Activated CD8-positive, alpha-beta T cell treated with anti-CD3 and anti-CD28 coated beads for 36 hours (primary cell): ENCODE measurements at regions of chr4 and their contacts with region 1.

Region 1: DNA sequence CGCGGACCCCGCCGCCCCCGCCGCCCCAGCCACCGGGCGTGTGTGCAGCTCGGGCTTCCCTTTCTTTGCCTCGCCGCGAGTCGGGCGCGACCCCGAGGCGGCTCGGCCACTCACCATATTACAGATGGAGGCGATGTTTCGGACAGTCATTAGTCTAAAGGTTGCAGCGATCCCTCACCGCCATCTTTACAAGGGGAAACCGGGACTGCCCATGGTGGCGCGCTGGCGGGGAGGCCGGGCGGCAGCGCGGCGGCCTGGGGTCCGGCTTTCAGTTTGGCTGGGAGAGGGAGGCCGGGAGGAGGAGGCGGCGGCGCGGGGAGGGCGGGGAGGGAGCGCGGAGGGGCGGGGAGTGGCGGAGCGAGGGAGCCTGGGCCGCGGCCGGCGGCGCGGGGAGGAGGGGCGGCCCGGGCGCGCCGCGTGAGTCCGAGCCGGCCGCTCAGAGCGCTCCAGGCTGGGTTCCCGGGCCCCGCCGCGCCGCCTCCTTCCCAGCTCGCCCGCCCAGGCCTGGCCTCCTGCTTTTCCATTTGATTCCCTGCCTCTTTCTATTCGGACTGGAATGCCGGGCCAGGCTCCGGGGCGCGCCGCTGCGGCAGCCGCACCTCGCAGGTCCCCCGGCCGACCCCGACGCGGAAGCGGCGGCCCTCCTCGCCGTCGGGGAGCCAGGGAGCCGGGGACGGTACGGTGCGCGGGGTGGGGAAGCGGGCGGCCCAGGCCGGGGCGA is at the start of gene USP46:
- DNase-seq: peak; percentile 35
- ATAC-seq: peak; percentile 85
- H3K4me3 Mint-ChIP-seq: peak within 1 kb of the TSS; percentile 78
- H3K27ac Mint-ChIP-seq: peak within 1 kb of the TSS; percentile 55
- H3K4me1 Mint-ChIP-seq: peaks cover 17% of the 10 kb centered on the region
- H3K27me3 Mint-ChIP-seq: peaks cover 29% of the 10 kb centered on the region
- CTCF ChIP-seq: no peak
- total RNA-seq, gene USP46: 2.8 TPM

Region 2: DNA sequence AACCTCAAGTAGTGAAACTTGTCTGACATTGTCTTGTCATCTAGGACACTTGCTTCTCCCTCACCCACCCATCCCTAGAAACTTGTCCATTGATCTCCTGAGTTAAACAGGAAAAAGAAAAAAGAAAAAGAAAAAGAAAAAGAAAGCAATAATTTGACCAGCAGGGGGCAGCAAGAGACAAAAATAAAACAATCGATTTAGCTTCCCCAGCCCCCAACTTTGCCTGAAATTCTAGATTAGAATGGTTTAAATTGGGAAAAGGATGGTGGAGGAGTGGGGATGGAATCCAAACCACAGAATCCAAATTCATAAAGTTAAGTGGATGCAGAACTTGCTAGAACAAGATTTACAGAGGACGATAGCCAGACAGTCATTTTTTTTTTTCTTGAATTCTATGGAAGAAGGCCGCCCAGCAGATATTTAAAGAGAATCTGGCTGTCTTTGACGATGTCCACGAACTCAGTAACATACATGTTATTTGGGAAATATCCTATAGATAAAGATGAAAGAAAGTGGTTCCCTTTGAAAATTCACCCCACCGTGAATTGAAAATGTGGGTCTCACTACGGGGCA is 282.9 kb before region 1 on chr4:
- CTCF ChIA-PET with region 1: interaction called, 3 read pairs
- POLR2A ChIA-PET with region 1: no interaction called
- intact Hi-C with region 1: loop called (anchors 10 kb)
- DNase-seq: peak; percentile 30
- ATAC-seq: no peak
- H3K4me3 Mint-ChIP-seq: no peak overlapping the region
- H3K27ac Mint-ChIP-seq: no peak overlapping the region
- H3K4me1 Mint-ChIP-seq: no peaks in the 10 kb centered on the region
- H3K27me3 Mint-ChIP-seq: peaks cover 7% of the 10 kb centered on the region
- CTCF ChIP-seq: peak; percentile 87

Region 3: DNA sequence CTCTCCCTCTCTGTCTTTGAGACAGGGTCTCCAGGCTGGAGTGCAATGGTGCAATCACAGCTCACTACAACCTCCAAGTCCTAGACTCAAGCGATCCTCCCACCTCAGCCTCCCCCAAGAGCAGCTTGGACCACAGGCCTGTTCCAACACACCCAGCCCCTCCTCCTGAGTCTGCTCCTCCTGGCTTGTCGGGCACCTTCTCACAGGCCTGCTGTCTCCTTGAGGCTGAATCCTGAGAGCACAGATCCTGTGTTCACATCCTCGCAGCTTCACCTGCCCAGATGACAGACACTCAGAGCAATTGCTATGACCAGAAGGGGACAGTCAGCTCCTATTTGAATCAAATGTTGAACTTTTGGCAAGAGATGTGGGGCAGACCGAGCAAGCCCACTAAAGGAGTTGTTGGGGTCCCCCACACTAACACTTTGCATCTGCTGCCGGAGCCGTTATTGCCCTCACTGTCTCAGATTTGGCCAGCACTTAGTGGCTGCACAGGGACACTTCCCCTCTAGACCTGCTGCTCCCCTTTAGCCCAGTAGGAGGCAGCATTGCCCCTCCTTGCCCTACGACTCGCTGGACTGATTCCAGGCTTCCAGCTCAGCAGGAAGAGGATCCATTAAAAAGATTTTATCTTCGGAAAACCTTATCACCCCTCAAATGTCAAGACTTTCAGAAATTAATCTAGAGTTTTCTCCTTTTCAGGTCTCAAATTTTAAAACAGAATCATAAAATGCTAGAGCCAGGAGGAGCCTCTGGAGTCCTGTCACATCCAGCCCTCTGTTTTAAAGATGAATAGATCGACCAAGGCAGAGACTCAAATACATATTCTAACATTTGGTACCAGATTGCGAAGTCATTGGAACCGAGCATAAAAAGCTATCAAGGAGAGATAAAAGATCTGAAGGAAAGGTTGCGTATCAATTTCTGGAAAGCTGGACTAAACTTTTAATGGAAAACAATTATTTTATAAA is 113.8 kb before region 1 on chr4:
- CTCF ChIA-PET with region 1: interaction called, 15 read pairs
- POLR2A ChIA-PET with region 1: no interaction called
- intact Hi-C with region 1: loop called (anchors 5 kb)
- DNase-seq: peak; percentile 62
- ATAC-seq: peak; percentile 64
- H3K4me3 Mint-ChIP-seq: no peak overlapping the region
- H3K27ac Mint-ChIP-seq: no peak overlapping the region
- H3K4me1 Mint-ChIP-seq: no peaks in the 10 kb centered on the region
- H3K27me3 Mint-ChIP-seq: peaks cover 2% of the 10 kb centered on the region
- CTCF ChIP-seq: peak; percentile 83

Region 4: DNA sequence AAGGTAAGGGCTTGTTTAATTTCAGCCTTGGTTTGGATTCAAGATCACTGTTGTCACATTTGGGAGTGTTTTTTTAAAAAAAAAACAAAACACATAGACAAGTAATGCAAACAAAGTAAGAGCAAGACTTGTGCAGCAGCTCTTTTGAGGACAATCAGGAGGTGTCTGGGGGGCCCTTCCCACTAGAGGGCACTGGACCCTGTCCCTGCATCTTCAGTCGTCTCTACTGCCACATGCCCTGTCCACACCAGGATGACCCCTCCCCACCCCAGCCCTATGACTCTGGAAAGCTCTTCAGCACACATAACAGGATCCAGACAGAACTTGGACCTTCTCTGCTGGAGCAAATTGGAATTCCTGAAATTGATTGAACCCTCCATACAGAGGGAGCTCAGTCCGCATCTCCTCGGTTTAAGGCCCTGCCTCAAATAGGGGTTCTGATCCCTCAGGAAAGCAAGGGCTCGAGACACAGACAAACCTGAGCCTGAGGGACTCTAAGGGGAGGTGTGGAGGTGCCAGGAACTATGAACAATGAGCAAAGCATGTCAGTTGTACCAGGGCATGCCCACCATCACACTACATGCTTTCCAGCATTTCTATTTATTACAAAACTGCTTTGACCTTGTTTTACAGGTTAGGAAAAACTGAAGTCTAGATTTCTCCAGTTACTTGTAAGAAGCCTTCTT is 70.9 kb before region 1 on chr4:
- CTCF ChIA-PET with region 1: interaction called, 10 read pairs
- POLR2A ChIA-PET with region 1: no interaction called
- intact Hi-C with region 1: no loop called
- DNase-seq: peak; percentile 40
- ATAC-seq: peak; percentile 24
- H3K4me3 Mint-ChIP-seq: no peak overlapping the region
- H3K27ac Mint-ChIP-seq: no peak overlapping the region
- H3K4me1 Mint-ChIP-seq: peaks cover 7% of the 10 kb centered on the region
- H3K27me3 Mint-ChIP-seq: peaks cover 2% of the 10 kb centered on the region
- CTCF ChIP-seq: peak; percentile 56

Region 5: GRCh38 chr4:52712172-52712990 is 53.2 kb after region 1 on chr4:
- CTCF ChIA-PET with region 1: no interaction called
- POLR2A ChIA-PET with region 1: interaction called, 11 read pairs
- intact Hi-C with region 1: no loop called
- DNase-seq: peak; percentile 98
- ATAC-seq: peak; percentile 96
- H3K4me3 Mint-ChIP-seq: peak overlapping the region; percentile 96
- H3K27ac Mint-ChIP-seq: peak overlapping the region; percentile 98
- H3K4me1 Mint-ChIP-seq: peaks cover 38% of the 10 kb centered on the region
- H3K27me3 Mint-ChIP-seq: no peaks in the 10 kb centered on the region
- CTCF ChIP-seq: no peak

Region 6: GRCh38 chr4:52932591-52933470 is 273.7 kb after region 1 on chr4:
- CTCF ChIA-PET with region 1: no interaction called
- POLR2A ChIA-PET with region 1: no interaction called
- intact Hi-C with region 1: no loop called
- DNase-seq: no peak
- ATAC-seq: no peak
- H3K4me3 Mint-ChIP-seq: no peak overlapping the region
- H3K27ac Mint-ChIP-seq: no peak overlapping the region
- H3K4me1 Mint-ChIP-seq: no peaks in the 10 kb centered on the region
- H3K27me3 Mint-ChIP-seq: no peaks in the 10 kb centered on the region
- CTCF ChIP-seq: no peak